Left ventricle myocardium superior (tissue), 1 donor: ENCODE measurements at regions of chr1 and their contacts with region 1.

Region 1: GRCh38 chr1:185646202-185646683 is 87.9 kb upstream of the HMCN1 start:
- DNase-seq: no peak
- ATAC-seq: peak; percentile 97

Region 2: GRCh38 chr1:184895086-184895485 is 751.2 kb before region 1 on chr1:
- intact Hi-C with region 1: no loop called
- DNase-seq: no peak
- ATAC-seq: no peak

Region 3: GRCh38 chr1:185595835-185596667 is 50.2 kb before region 1 on chr1:
- intact Hi-C with region 1: loop called (anchors 5 kb)
- DNase-seq: no peak
- ATAC-seq: peak; percentile 29